ENCODE measurements at regions of chr20 and their contacts with region 1.

Region 1: GRCh38 chr20:52379723-52380336 is 188.3 kb upstream of the ZFP64 start:
- DNase-seq: no peak
- ATAC-seq: no peak
- H3K4me3 Mint-ChIP-seq: no peak overlapping the region
- H3K27ac Mint-ChIP-seq: no peak overlapping the region
- H3K4me1 Mint-ChIP-seq: no peaks in the 10 kb centered on the region
- H3K27me3 Mint-ChIP-seq: peaks cover 2% of the 10 kb centered on the region
- CTCF ChIP-seq: peak; percentile 73

Region 2: GRCh38 chr20:52312132-52312729 is 67.6 kb before region 1 on chr20:
- CTCF ChIA-PET with region 1: interaction called, 4 read pairs
- POLR2A ChIA-PET with region 1: no interaction called
- intact Hi-C with region 1: loop called (anchors 1 kb)
- DNase-seq: no peak
- ATAC-seq: no peak
- H3K4me3 Mint-ChIP-seq: no peak overlapping the region
- H3K27ac Mint-ChIP-seq: no peak overlapping the region
- H3K4me1 Mint-ChIP-seq: no peaks in the 10 kb centered on the region
- H3K27me3 Mint-ChIP-seq: peaks cover 25% of the 10 kb centered on the region
- CTCF ChIP-seq: no peak